ENCODE measurements at regions of chr12 and their contacts with region 1.

Region 1: DNA sequence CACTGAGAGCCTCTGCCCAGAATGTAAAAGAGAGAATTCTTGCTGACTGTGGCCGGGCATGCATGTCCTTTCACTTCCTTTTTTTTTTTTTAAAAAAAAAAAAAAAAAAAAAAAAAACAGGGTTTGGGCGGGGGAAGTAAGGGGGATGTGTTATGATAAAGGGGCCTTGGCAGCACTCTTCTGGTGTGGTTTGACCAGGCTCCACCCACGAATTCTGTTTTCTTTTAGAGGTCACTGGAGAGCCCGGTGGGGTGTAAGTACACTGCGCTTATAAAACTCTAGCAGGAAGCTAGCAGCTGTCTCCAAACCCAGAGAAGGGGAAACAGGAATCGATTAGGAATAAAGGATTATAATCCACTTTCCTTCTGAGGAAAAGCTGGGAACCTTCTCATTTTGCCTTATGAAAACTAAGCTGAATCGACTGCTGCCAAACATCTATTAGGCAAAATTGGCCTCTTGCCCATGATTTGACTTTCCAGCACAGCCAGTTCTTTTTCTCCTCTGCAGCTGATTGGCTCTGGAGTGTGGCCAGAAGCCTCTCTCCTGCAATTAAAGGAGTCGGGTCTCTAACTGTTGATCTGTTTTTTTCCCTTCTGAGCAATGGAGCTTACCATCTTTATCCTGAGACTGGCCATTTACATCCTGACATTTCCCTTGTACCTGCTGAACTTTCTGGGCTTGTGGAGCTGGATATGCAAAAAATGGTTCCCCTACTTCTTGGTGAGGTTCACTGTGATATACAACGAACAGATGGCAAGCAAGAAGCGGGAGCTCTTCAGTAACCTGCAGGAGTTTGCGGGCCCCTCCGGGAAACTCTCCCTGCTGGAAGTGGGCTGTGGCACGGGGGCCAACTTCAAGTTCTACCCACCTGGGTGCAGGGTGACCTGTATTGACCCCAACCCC is 27.7 kb upstream of the HIGD1C start:
- DNase-seq: peak; percentile 60
- H3K4me3 Mint-ChIP-seq: peak overlapping the region; percentile 72
- H3K27ac Mint-ChIP-seq: no peak overlapping the region
- H3K4me1 Mint-ChIP-seq: peaks cover 25% of the 10 kb centered on the region
- H3K27me3 Mint-ChIP-seq: no peaks in the 10 kb centered on the region
- CTCF ChIP-seq: no peak

Region 2: DNA sequence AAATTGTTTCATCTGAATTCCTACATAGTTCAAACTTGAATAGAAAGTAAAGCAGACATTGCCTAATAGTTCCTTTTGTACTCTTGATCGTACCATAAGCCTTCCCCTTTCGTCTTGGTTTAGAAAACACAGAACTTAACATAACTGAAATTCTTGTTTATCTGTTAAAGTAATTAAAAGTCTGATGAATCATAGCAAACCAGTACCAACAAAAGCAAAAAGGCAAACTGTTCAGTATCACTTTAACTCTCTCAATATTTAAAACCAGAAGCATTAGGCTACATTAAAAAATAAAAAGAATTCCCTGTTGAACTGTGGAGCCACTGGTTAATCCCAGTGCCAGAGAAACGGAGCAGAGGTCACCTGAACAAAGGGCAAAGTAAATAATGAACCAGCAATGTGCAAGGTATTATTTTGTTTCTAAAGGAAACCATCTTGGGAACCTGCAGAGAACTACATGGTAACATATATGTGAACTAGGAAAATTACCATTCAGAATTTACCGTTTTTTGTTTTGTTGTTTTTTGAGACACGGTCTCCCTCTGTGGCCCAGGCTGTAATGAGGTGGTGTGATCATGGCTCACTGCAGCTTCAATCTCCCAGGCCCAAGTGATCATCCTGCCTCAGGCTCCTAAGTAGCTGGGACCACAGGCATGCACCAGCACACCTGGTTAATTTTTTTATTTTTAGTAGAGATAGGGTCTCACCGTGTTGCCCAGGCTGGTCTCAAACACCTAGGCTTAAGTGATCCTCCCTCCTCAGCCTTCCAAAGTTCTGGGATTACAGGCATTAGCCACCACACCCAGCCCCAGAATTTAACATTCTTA is 10.5 kb after region 1 on chr12:
- CTCF ChIA-PET with region 1: no interaction called
- intact Hi-C with region 1: no loop called
- DNase-seq: no peak
- H3K4me3 Mint-ChIP-seq: no peak overlapping the region
- H3K27ac Mint-ChIP-seq: peak overlapping the region; percentile 36
- H3K4me1 Mint-ChIP-seq: peaks cover 8% of the 10 kb centered on the region
- H3K27me3 Mint-ChIP-seq: no peaks in the 10 kb centered on the region
- CTCF ChIP-seq: no peak

Region 3: GRCh38 chr12:51025836-51026638 is 101.3 kb after region 1 on chr12 and contains the start of gene SLC11A2:
- CTCF ChIA-PET with region 1: interaction called, 5 read pairs
- intact Hi-C with region 1: loop called (anchors 10 kb)
- DNase-seq: peak; percentile 93
- H3K4me3 Mint-ChIP-seq: peak within 1 kb of the TSS; percentile 88
- H3K27ac Mint-ChIP-seq: peak within 1 kb of the TSS; percentile 91
- H3K4me1 Mint-ChIP-seq: peaks cover 25% of the 10 kb centered on the region
- H3K27me3 Mint-ChIP-seq: no peaks in the 10 kb centered on the region
- CTCF ChIP-seq: no peak
- total RNA-seq, gene SLC11A2: 49.5 and 51.3 TPM in 2 replicates